ENCODE measurements at regions of chr5 and their contacts with region 1.

Region 1: GRCh38 chr5:116402235-116402634 is 172.4 kb downstream of the SEMA6A start:
- DNase-seq: no peak
- ATAC-seq: no peak
- H3K4me3 ChIP-seq: no peak overlapping the region
- H3K27ac ChIP-seq: no peak overlapping the region
- H3K4me1 ChIP-seq: no peaks in the 10 kb centered on the region
- H3K27me3 ChIP-seq: no peaks in the 10 kb centered on the region
- CTCF ChIP-seq: no peak

Region 2: GRCh38 chr5:116423141-116423540 is 20.9 kb after region 1 on chr5:
- CTCF ChIA-PET with region 1: no interaction called
- POLR2A ChIA-PET with region 1: no interaction called
- intact Hi-C with region 1: loop called (anchors 2 kb)
- DNase-seq: peak; percentile 19
- ATAC-seq: peak; percentile 84
- H3K4me3 ChIP-seq: no peak overlapping the region
- H3K27ac ChIP-seq: no peak overlapping the region
- H3K4me1 ChIP-seq: no peaks in the 10 kb centered on the region
- H3K27me3 ChIP-seq: no peaks in the 10 kb centered on the region
- CTCF ChIP-seq: no peak

Measured in PC-3 (cell line).